ENCODE measurements at regions of chr9 and their contacts with region 1.

Region 1: GRCh38 chr9:127104465-127105311 is 17.7 kb downstream of the ANGPTL2 start:
- DNase-seq: peak; percentile 32
- ATAC-seq: no peak
- H3K4me3 ChIP-seq: no peak overlapping the region
- H3K27ac ChIP-seq: no peak overlapping the region
- H3K4me1 ChIP-seq: peaks cover 22% of the 10 kb centered on the region
- H3K27me3 ChIP-seq: no peaks in the 10 kb centered on the region
- CTCF ChIP-seq: no peak
- POLR2A ChIP-seq: no peak
- RAD21 ChIP-seq: no peak

Region 2: GRCh38 chr9:126965541-126966428 is 138.9 kb before region 1 on chr9:
- CTCF ChIA-PET with region 1: no interaction called
- POLR2A ChIA-PET with region 1: no interaction called
- dilution Hi-C with region 1: no loop called
- in situ Hi-C with region 1: no loop called
- intact Hi-C with region 1: loop called (anchors 5 kb)
- DNase-seq: peak; percentile 61
- ATAC-seq: peak; percentile 95
- H3K4me3 ChIP-seq: no peak overlapping the region
- H3K27ac ChIP-seq: no peak overlapping the region
- H3K4me1 ChIP-seq: peaks cover 2% of the 10 kb centered on the region; the same call in 1 of the 2 replicates
- H3K27me3 ChIP-seq: no peaks in the 10 kb centered on the region
- CTCF ChIP-seq: peak; percentile 86
- POLR2A ChIP-seq: peak; percentile 31; the same call in 1 of the 2 replicates
- RAD21 ChIP-seq: peak; percentile 95